Activated T-helper 2 cell treated with anti-CD3 and anti-CD28 coated beads, Interferon-gamma antibody, Interleukin-2, Interleukin-4, amounts not matched to agents 10 μg/mL and 5 μg/mL and 100 μg/mL, durations not matched to agents 14 hours and 24 hours and 36 hours (primary cell): ENCODE measurements at regions of chrX and their contacts with region 1.

Region 1: DNA sequence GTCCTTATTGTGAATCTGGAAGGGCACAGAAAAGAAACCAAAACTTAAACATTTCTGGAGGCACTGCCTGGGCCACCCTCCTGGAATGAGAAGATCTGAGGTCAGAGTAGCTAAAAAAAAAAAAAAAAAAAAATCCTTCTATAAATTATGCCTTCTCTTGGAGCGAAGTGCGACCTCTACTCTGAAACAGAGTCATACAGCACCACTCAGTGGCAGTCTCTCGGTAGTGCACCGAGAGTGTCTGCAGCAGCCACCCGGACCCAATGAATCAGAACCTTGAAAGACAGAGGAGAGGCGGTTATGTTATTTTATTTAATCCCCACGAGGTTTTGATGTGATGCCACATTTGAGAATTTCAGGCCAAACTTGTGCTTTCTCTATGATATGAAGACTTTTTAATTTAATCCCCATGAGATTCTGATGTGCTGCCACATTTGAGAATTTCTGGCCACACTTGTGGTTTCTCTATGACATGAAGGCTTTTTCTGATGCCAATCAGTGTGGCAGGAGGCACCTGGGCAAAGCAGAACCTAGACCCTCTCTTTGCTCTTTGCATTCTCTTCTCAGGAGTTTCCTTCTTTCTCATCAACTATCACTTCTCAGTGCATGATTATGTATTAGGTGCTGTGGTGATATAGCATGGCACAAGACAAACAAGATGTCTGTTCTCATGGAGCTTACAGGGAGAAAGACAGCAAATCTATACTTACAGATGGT is 5.6 kb upstream of the CT47C1 start:
- DNase-seq: peak; percentile 7
- H3K4me3 Mint-ChIP-seq: no peak overlapping the region
- H3K27ac Mint-ChIP-seq: no peak overlapping the region
- H3K4me1 Mint-ChIP-seq: no peaks in the 10 kb centered on the region
- H3K27me3 Mint-ChIP-seq: no peaks in the 10 kb centered on the region

Region 2: GRCh38 chrX:119004920-119005524 is 62.2 kb before region 1 on chrX:
- intact Hi-C with region 1: loop called (anchors 5 kb)
- DNase-seq: peak; percentile 13
- H3K4me3 Mint-ChIP-seq: no peak overlapping the region
- H3K27ac Mint-ChIP-seq: no peak overlapping the region
- H3K4me1 Mint-ChIP-seq: no peaks in the 10 kb centered on the region
- H3K27me3 Mint-ChIP-seq: no peaks in the 10 kb centered on the region